Activated CD4-positive, alpha-beta memory T cell treated with anti-CD3 and anti-CD28 coated beads for 36 hours (primary cell): ENCODE measurements at regions of chr3 and their contacts with region 1.

Region 1: GRCh38 chr3:41836360-41837134 is 125.4 kb downstream of the ULK4 start:
- DNase-seq: peak; percentile 36
- H3K4me3 Mint-ChIP-seq: no peak overlapping the region
- H3K27ac Mint-ChIP-seq: peak overlapping the region; percentile 64
- H3K4me1 Mint-ChIP-seq: peaks cover 17% of the 10 kb centered on the region
- H3K27me3 Mint-ChIP-seq: peaks cover 1% of the 10 kb centered on the region

Region 2: DNA sequence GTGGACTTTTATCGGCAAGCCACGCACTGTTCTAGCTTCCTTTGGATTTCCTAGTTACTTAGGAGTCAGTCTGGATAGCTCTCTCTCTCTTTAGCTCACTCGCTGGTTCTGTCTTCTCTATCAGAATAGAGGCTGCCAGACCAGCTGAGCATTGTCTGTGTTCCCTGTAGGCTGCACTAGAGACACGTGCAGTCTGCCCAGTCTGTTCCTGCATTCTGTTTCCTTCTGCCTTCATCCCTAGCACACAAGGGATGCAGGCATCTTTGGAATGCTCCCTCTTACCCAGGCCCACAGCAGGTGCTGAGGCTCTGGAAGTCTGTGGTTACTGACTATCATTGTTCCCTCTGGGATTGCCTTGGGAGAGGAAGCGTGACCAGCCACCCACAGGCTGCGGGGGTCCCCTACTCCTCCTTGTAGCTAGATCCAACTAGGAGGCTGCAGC is 989.0 kb before region 1 on chr3:
- CTCF ChIA-PET with region 1: no interaction called
- POLR2A ChIA-PET with region 1: no interaction called
- intact Hi-C with region 1: no loop called
- DNase-seq: no peak
- H3K4me3 Mint-ChIP-seq: no peak overlapping the region
- H3K27ac Mint-ChIP-seq: no peak overlapping the region
- H3K4me1 Mint-ChIP-seq: no peaks in the 10 kb centered on the region
- H3K27me3 Mint-ChIP-seq: peaks cover 4% of the 10 kb centered on the region

Region 3: GRCh38 chr3:41117398-41117870 is 719.1 kb before region 1 on chr3:
- CTCF ChIA-PET with region 1: no interaction called
- POLR2A ChIA-PET with region 1: no interaction called
- intact Hi-C with region 1: loop called (anchors 5 kb)
- DNase-seq: peak; percentile 94
- H3K4me3 Mint-ChIP-seq: peak overlapping the region; percentile 16
- H3K27ac Mint-ChIP-seq: peak overlapping the region; percentile 78
- H3K4me1 Mint-ChIP-seq: peaks cover 24% of the 10 kb centered on the region
- H3K27me3 Mint-ChIP-seq: no peaks in the 10 kb centered on the region

Region 4: DNA sequence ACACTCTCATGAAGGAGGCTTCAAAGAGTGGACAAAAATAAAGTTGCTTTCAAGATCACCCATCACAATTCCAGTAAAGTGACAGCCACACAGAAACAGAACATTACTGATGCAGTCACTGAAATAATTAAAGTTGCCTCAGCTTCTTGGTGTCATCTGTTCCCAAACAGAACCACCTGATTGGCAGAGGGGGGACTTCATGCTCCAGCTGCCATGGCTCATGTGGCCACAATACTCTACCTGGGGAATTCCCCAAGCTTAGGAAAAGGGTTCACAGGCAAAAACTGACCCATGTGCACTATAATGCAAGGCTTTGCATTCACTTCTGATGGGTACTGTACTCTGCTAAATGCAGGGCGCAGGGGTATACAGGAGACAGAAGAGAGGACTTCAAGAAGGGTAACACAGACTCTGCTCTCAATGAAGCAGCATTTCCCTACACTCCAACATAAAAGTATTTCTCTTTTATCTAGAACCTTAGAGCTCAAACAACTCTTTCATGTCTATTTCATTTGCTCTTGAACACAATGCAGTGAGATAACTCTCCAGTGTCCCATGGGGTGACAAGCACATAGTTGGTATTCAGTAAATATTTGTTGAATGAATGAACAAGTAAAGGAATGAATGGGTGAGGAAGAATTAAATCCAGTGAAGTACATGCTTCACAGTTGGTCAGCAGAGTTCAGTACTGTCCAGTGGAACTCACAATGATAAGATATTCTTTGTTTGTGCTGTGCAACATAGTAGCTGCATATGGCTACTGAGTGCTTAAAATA is 645.9 kb before region 1 on chr3:
- CTCF ChIA-PET with region 1: no interaction called
- POLR2A ChIA-PET with region 1: no interaction called
- intact Hi-C with region 1: loop called (anchors 1 kb)
- DNase-seq: peak; percentile 21
- H3K4me3 Mint-ChIP-seq: no peak overlapping the region
- H3K27ac Mint-ChIP-seq: no peak overlapping the region
- H3K4me1 Mint-ChIP-seq: peaks cover 29% of the 10 kb centered on the region
- H3K27me3 Mint-ChIP-seq: peaks cover 3% of the 10 kb centered on the region

Region 5: DNA sequence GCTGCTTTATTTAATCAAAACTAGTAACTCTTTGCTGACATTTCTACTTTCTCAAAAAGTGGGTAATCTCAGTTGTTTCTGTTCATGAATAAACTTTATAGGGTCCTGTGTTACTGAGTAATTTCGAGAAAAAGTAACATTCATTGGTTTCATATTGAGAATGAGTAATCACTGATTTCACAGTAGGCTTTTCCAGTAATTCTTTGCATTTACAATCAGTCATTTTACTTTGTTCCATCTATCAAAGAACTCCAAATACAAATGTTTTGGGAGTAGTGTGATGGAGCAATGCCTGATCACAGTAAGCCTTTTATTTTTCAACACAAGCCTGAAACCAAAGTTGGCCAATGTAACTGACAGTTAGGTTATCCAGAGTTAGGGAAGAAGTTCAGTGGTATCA is 228.2 kb before region 1 on chr3:
- CTCF ChIA-PET with region 1: no interaction called
- POLR2A ChIA-PET with region 1: no interaction called
- intact Hi-C with region 1: loop called (anchors 1 kb)
- DNase-seq: no peak
- H3K4me3 Mint-ChIP-seq: no peak overlapping the region
- H3K27ac Mint-ChIP-seq: no peak overlapping the region
- H3K4me1 Mint-ChIP-seq: peaks cover 15% of the 10 kb centered on the region
- H3K27me3 Mint-ChIP-seq: no peaks in the 10 kb centered on the region

Region 6: GRCh38 chr3:41846850-41847249 is 10.3 kb after region 1 on chr3:
- CTCF ChIA-PET with region 1: no interaction called
- POLR2A ChIA-PET with region 1: no interaction called
- intact Hi-C with region 1: loop called (anchors 1 kb)
- DNase-seq: no peak
- H3K4me3 Mint-ChIP-seq: no peak overlapping the region
- H3K27ac Mint-ChIP-seq: no peak overlapping the region
- H3K4me1 Mint-ChIP-seq: peaks cover 25% of the 10 kb centered on the region
- H3K27me3 Mint-ChIP-seq: no peaks in the 10 kb centered on the region

Region 7: GRCh38 chr3:41863024-41863423 is 26.5 kb after region 1 on chr3:
- CTCF ChIA-PET with region 1: no interaction called
- POLR2A ChIA-PET with region 1: no interaction called
- intact Hi-C with region 1: no loop called
- DNase-seq: no peak
- H3K4me3 Mint-ChIP-seq: no peak overlapping the region
- H3K27ac Mint-ChIP-seq: no peak overlapping the region
- H3K4me1 Mint-ChIP-seq: no peaks in the 10 kb centered on the region
- H3K27me3 Mint-ChIP-seq: no peaks in the 10 kb centered on the region

Region 8: DNA sequence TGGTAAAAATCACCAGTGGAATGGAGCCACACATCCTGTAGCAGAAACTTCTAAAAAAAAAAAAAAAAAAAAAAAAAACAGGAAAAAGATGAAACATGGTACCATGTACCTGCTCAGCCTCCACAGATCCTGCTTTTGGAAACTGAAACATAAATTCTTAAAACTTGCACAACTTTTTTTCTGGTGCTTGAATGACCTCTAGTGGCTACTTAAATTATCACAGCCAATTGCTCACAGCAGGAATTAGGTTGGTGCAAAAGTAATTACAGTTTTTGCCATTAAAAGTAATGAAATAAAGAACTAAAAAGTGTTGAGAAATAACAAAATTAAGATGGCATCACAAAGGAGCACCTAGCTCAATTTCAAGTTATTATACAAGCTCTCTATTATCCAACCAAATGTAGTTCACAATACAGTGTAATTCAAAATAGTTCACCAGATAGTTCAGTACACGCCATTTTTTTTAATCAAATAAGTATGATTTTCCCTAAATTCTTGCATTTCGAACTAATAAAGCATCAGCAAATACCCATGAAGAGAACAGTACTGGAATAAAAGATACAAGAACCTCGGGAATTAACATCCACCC is 44.8 kb after region 1 on chr3:
- CTCF ChIA-PET with region 1: no interaction called
- POLR2A ChIA-PET with region 1: no interaction called
- intact Hi-C with region 1: no loop called
- DNase-seq: no peak
- H3K4me3 Mint-ChIP-seq: no peak overlapping the region
- H3K27ac Mint-ChIP-seq: no peak overlapping the region
- H3K4me1 Mint-ChIP-seq: no peaks in the 10 kb centered on the region
- H3K27me3 Mint-ChIP-seq: no peaks in the 10 kb centered on the region

Region 9: GRCh38 chr3:41961750-41962679 is 125.5 kb after region 1 on chr3 and contains the start of gene ULK4:
- CTCF ChIA-PET with region 1: no interaction called
- POLR2A ChIA-PET with region 1: no interaction called
- intact Hi-C with region 1: loop called (anchors 5 kb)
- DNase-seq: peak; percentile 98
- H3K4me3 Mint-ChIP-seq: peak within 1 kb of the TSS; percentile 90
- H3K27ac Mint-ChIP-seq: peak within 1 kb of the TSS; percentile 80
- H3K4me1 Mint-ChIP-seq: peaks cover 17% of the 10 kb centered on the region
- H3K27me3 Mint-ChIP-seq: peaks cover under 1% of the 10 kb centered on the region
- total RNA-seq, gene ULK4: 9.5 to 10.8 TPM

Region 10: GRCh38 chr3:42080452-42080891 is 243.9 kb after region 1 on chr3:
- CTCF ChIA-PET with region 1: no interaction called
- POLR2A ChIA-PET with region 1: no interaction called
- intact Hi-C with region 1: loop called (anchors 5 kb)
- DNase-seq: peak; percentile 51
- H3K4me3 Mint-ChIP-seq: no peak overlapping the region
- H3K27ac Mint-ChIP-seq: peak overlapping the region; percentile 80
- H3K4me1 Mint-ChIP-seq: peaks cover 59% of the 10 kb centered on the region
- H3K27me3 Mint-ChIP-seq: no peaks in the 10 kb centered on the region